Gastrocnemius medialis (tissue), 4 donors: ENCODE measurements at regions of chr15 and their contacts with region 1.

Region 1: DNA sequence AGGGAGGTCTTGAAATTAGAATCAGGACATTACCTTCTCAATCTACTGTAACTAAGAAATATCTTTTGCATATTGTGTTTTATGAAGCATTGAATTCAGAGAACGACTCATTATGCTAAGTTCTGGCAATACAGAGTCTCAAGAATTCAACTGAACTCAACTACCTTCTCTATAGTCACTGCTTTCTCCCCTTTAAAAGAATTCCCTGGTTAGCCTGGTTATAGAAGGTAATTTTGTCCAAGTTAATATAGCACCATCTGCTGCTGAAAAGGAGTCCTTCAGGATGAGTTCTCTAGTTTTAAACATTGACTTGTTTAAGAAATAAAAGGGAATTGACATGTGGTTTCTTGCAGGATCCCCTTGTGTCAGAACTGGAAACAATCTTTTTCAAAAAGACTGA is 60.2 kb downstream of the IL16 start:
- DNase-seq: no peak
- ATAC-seq: no peak
- H3K4me3 ChIP-seq: no peak overlapping the region
- H3K27ac ChIP-seq: no peak overlapping the region
- H3K4me1 ChIP-seq: no peaks in the 10 kb centered on the region
- H3K27me3 ChIP-seq: no peaks in the 10 kb centered on the region
- CTCF ChIP-seq: peak in 2 of 5 experiments; percentile 16 to 42
- POLR2A ChIP-seq: no peak

Region 2: GRCh38 chr15:81182756-81183438 is 74.0 kb before region 1 on chr15:
- in situ Hi-C with region 1: no loop called
- intact Hi-C with region 1: loop called (anchors 2 kb)
- DNase-seq: no peak
- ATAC-seq: peak in 1 of 2 donors; percentile 43
- H3K4me3 ChIP-seq: peak overlapping the region; percentile 25 to 40 (median 34)
- H3K27ac ChIP-seq: peak overlapping the region; percentile 31 to 57 (median 42)
- H3K4me1 ChIP-seq: no peaks in the 10 kb centered on the region
- H3K27me3 ChIP-seq: peaks cover 0 to 3% (median 3%) of the 10 kb centered on the region in 3 donors
- CTCF ChIP-seq: no peak
- POLR2A ChIP-seq: no peak

Region 3: GRCh38 chr15:81211376-81211775 is 45.5 kb before region 1 on chr15:
- in situ Hi-C with region 1: no loop called
- intact Hi-C with region 1: no loop called
- DNase-seq: peak in 1 of 2 donors; percentile 52
- ATAC-seq: peak; percentile 36 to 56
- H3K4me3 ChIP-seq: no peak overlapping the region
- H3K27ac ChIP-seq: peak overlapping the region in 1 of 4 donors; percentile 24
- H3K4me1 ChIP-seq: no peaks in the 10 kb centered on the region
- H3K27me3 ChIP-seq: no peaks in the 10 kb centered on the region
- CTCF ChIP-seq: no peak
- POLR2A ChIP-seq: no peak

Region 4: DNA sequence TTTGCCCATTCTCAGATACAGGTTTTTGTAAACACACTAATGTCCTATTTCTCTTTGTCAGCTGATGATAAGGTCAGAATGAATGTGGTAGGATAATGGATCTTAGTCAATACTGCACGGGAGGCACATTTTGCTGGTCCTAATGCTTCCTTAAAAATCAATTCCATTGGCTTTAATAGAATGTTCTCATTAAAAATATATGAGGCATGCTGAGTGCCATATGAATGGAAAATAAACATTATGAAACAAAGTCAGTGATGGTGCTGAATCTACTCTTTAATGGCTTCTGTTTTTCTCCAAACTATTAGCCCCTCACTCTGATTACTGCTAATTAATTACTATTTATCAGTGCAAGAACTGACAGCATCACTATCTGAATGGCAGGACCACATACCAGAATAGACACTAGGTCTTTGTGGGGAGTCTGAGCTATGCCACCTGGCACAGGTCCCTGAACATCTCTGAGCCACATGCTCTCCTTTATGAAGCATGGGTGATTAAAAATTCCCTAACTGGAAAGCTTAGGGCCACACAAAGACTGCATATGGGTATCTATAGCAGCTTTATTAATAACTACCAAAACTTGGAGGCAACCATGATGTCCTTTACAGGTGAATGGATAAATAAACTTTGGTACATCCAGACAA is 510.0 kb after region 1 on chr15:
- in situ Hi-C with region 1: no loop called
- intact Hi-C with region 1: no loop called
- DNase-seq: no peak
- ATAC-seq: no peak
- H3K4me3 ChIP-seq: no peak overlapping the region
- H3K27ac ChIP-seq: no peak overlapping the region
- H3K4me1 ChIP-seq: no peaks in the 10 kb centered on the region
- H3K27me3 ChIP-seq: no peaks in the 10 kb centered on the region
- CTCF ChIP-seq: no peak
- POLR2A ChIP-seq: no peak